AG04449 (cell line): ENCODE measurements at regions of chr9 and their contacts with region 1.

Region 1: DNA sequence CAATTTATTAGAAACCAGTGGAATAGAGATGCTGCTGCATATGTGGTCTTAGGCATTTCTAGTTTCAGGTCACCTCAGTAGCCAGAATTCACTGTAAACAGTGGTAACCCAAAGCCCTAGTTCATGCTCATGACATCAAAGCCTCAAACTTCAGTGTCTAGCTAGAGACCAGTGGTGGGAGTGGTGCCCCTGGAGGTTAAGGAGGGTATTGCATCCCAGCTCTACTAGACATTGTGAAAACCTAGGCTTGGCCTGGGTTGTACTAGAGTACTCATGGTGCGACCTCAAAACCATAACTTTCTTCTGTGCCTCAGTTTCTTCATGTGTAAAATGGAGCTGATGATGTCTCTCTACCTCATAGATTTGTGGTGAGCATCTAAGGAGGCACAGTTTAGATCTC is 18.8 kb downstream of the COL5A1 start:
- DNase-seq: no peak
- H3K4me3 ChIP-seq: no peak overlapping the region
- CTCF ChIP-seq: peak; percentile 69

Region 2: GRCh38 chr9:134648701-134649535 is 11.5 kb before region 1 on chr9:
- CTCF ChIA-PET with region 1: interaction called, 10 read pairs
- POLR2A ChIA-PET with region 1: interaction called, 23 read pairs
- DNase-seq: no peak
- H3K4me3 ChIP-seq: no peak overlapping the region; the same call in 1 of the 2 replicates
- CTCF ChIP-seq: no peak

Region 3: DNA sequence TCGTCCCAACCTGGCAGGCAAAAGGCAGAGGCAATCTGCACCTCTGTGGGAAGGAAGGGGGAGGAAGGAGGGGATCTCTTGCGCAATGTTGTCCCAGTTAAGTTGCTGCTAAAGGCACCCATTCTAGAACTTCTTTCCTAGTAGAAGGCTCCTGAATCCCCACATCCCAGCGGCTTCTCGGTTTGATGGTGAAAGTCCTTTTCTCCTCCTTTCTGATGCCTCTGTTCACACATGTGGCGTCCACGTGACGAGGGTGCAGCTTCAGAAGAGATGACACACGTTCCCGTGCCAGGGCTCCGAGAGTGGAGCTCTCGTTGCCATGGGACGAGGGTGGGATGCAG is 123.3 kb after region 1 on chr9:
- CTCF ChIA-PET with region 1: no interaction called
- POLR2A ChIA-PET with region 1: no interaction called
- DNase-seq: no peak
- H3K4me3 ChIP-seq: no peak overlapping the region
- CTCF ChIP-seq: no peak